ENCODE measurements at regions of chr6 and their contacts with region 1.

Region 1: GRCh38 chr6:29649701-29650673 is 6.9 kb upstream of the MOG start:
- DNase-seq: peak; percentile 96

Region 2: GRCh38 chr6:29426655-29427054 is 223.3 kb before region 1 on chr6:
- CTCF ChIA-PET with region 1: no interaction called
- POLR2A ChIA-PET with region 1: no interaction called
- DNase-seq: no peak

Region 3: GRCh38 chr6:29502597-29502996 is 147.4 kb before region 1 on chr6:
- CTCF ChIA-PET with region 1: no interaction called
- POLR2A ChIA-PET with region 1: no interaction called
- DNase-seq: no peak

Region 4: GRCh38 chr6:29632789-29633533 is 17.0 kb before region 1 on chr6 and contains the start of gene GABBR1:
- CTCF ChIA-PET with region 1: interaction called, 15 read pairs
- POLR2A ChIA-PET with region 1: interaction called, 17 read pairs
- DNase-seq: peak; percentile 80

Region 5: GRCh38 chr6:29665942-29666825 is 16.2 kb after region 1 on chr6:
- CTCF ChIA-PET with region 1: interaction called, 118 read pairs
- POLR2A ChIA-PET with region 1: interaction called, 5 read pairs
- DNase-seq: no peak

Region 6: DNA sequence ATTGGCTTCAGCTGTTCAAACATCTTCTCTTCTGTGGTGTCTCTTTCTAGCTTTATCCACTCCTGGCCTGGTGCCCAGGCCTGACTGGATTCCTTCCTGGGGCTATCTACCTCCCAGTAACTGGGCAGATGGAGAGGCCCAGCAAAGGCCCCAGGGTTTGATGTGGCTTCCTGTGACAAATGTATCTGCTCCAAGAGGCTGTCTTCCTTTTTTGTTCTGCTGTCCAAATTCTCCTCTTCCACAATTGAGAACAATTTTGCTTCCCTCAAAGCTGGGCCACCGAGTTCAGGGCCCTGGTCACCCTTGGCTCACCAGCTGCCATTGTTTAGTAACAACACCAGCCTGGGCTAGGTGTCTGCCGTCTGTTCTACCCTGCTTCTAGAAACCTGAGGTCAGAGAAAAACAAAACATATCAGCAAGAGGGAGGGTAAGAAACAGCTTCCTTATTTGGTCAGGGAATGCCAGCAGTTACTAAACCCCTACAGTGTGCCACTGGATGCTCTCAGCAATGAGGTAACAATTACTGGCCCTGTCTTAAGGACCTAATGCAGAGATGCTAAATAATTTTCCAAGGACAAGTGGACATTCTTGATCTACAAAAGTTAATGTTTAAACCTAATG is 27.1 kb after region 1 on chr6:
- CTCF ChIA-PET with region 1: interaction called, 13 read pairs
- POLR2A ChIA-PET with region 1: no interaction called
- DNase-seq: no peak

Region 7: GRCh38 chr6:29696155-29697125 is 46.5 kb after region 1 on chr6:
- CTCF ChIA-PET with region 1: interaction called, 29 read pairs
- POLR2A ChIA-PET with region 1: interaction called, 10 read pairs
- DNase-seq: peak; percentile 34

Measured in HEK293T (cell line).